ENCODE measurements at regions of chr5 and their contacts with region 1.

Region 1: DNA sequence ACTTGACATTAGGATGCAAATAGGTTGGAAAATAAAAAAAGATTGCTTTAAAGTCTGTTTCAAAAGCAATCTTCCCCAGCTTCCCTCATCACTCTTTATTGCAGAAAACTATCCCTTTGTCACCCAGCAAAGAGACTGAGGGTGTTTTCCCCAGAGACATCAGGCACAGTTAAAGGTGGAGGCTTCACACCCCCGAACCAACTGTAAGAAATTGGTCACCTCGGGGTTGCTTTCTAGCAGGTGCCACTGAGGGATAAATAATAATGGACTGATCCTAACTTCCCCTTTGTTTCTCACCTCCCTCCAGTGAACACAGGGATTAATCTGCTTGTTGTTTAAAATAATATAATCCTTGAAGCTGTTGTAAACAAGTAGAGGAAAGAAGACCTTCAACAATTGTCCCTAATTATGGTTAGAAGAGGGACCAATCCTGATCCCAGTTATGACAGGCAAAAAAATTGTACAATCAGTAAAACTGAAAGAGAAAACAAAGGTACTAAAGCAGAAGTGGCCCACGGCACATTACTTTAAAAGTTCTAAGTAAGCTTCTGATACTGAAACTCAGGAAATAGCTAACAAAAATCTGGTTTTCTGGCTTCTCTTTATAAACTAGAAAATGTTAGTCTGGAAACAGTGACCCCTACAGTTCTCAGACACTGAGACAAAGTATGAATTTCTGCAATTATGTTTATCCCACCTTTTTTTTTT is 6.6 kb upstream of the PCSK1 start:
- DNase-seq: peak; percentile 69
- H3K4me3 ChIP-seq: peak overlapping the region; percentile 41
- H3K27ac ChIP-seq: peak overlapping the region; percentile 70
- H3K4me1 ChIP-seq: peaks cover 17% of the 10 kb centered on the region
- CTCF ChIP-seq: peak; percentile 71

Region 2: GRCh38 chr5:95858661-95859326 is 580.8 kb before region 1 on chr5:
- CTCF ChIA-PET with region 1: no interaction called
- POLR2A ChIA-PET with region 1: no interaction called
- intact Hi-C with region 1: loop called (anchors 10 kb)
- DNase-seq: peak; percentile 83
- H3K4me3 ChIP-seq: no peak overlapping the region
- H3K27ac ChIP-seq: no peak overlapping the region
- H3K4me1 ChIP-seq: peaks cover 15% of the 10 kb centered on the region
- CTCF ChIP-seq: peak; percentile 96

Region 3: DNA sequence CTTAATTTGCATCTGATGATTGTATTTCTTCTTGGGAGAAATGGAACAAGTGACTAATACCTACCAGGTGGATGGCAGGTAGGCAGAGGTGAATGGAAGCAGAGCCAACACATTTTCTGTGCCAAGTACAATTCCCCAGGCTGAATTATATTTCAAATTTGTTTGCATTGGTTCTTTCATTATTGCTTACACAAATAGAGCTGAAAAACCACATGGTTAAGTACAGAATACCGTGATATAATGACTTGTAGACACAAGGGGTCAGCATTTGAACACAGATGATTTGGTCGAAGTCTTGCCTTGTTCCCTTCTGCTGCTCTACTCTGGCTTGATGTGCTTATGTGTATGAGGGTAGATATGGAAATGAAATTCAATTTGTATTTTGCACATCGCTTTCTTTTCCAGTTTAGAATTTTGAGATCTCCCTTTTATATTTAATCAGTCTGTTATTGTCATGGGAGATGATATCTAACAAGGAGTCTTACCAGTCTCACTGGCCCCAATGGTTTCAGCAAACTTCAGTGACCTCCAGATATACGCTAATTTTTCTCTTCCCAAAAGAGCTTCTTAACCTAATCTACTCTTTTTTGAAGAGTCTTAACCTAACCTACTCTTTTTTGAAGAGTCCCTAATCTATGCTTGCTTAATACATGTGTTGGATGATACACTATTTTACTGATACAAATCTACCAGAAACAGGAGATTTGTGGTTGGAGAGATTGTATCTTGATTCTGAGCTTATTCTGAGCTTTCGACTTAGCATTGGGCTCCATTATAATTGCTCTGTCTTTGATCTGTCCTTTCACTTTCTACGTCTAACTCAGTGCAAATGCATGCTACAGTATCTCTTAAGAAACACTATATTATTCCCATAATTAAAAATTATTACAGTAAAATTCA is 94.7 kb before region 1 on chr5:
- CTCF ChIA-PET with region 1: interaction called, 3 read pairs
- POLR2A ChIA-PET with region 1: no interaction called
- intact Hi-C with region 1: loop called (anchors 5 kb)
- DNase-seq: peak; percentile 38
- H3K4me3 ChIP-seq: no peak overlapping the region
- H3K27ac ChIP-seq: no peak overlapping the region
- H3K4me1 ChIP-seq: no peaks in the 10 kb centered on the region
- CTCF ChIP-seq: peak; percentile 67